Brain microvascular endothelial cell (primary cell): ENCODE measurements at regions of chr16 and their contacts with region 1.

Region 1: DNA sequence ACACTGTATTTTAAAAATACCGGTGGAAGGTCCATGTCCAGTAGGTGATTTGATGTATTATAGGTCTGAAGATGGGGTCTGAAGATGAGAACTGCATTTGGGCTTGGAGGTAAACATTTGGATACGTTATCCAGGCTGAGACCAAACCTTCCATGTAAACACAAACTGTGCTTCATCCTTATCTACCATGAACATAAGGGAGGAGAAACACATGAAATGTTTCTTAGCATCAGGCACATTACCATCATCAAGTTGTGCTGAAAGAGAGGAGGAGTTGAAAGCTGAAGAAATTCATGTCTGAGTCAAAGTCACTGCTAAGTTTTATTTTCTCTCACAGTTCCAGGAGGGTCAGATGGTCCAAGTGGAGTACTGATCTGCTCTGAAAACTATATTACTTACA is 11.4 kb downstream of the SF3B3 start:
- DNase-seq: no peak
- H3K4me3 ChIP-seq: no peak overlapping the region
- H3K27ac ChIP-seq: no peak overlapping the region
- H3K27me3 ChIP-seq: no peaks in the 10 kb centered on the region
- CTCF ChIP-seq: no peak

Region 2: GRCh38 chr16:70304892-70305448 is 230.0 kb before region 1 on chr16:
- in situ Hi-C with region 1: no loop called
- DNase-seq: no peak
- H3K4me3 ChIP-seq: no peak overlapping the region
- H3K27ac ChIP-seq: no peak overlapping the region
- H3K27me3 ChIP-seq: no peaks in the 10 kb centered on the region
- CTCF ChIP-seq: no peak

Region 3: GRCh38 chr16:70568601-70569237 is 33.7 kb after region 1 on chr16:
- in situ Hi-C with region 1: loop called (anchors 5 kb)
- DNase-seq: no peak
- H3K4me3 ChIP-seq: no peak overlapping the region
- H3K27ac ChIP-seq: peak overlapping the region; percentile 21
- H3K27me3 ChIP-seq: no peaks in the 10 kb centered on the region
- CTCF ChIP-seq: no peak

Region 4: GRCh38 chr16:70685938-70686375 is 151.0 kb after region 1 on chr16 and contains the start of gene MTSS2:
- in situ Hi-C with region 1: no loop called
- DNase-seq: peak; percentile 48
- H3K4me3 ChIP-seq: peak within 1 kb of the TSS; percentile 75
- H3K27ac ChIP-seq: no peak within 1 kb of the TSS
- H3K27me3 ChIP-seq: no peaks in the 10 kb centered on the region
- CTCF ChIP-seq: no peak